Ascending aorta (tissue), 2 donors: ENCODE measurements at regions of chr5 and their contacts with region 1.

Region 1: GRCh38 chr5:69234457-69235268 is at the start of gene CDK7:
- DNase-seq: peak; percentile 75 to 97
- H3K4me3 ChIP-seq: peak within 1 kb of the TSS; percentile 85 to 87
- H3K27ac ChIP-seq: peak within 1 kb of the TSS; percentile 83 to 87
- H3K4me1 ChIP-seq: peaks cover 0 to 12% of the 10 kb centered on the region in 2 donors
- H3K27me3 ChIP-seq: no peaks in the 10 kb centered on the region
- CTCF ChIP-seq: no peak
- total RNA-seq, gene CDK7: 94.3 TPM

Region 2: GRCh38 chr5:68519143-68519542 is 715.5 kb before region 1 on chr5:
- intact Hi-C with region 1: no loop called
- DNase-seq: no peak
- H3K4me3 ChIP-seq: no peak overlapping the region
- H3K27ac ChIP-seq: no peak overlapping the region
- H3K4me1 ChIP-seq: no peaks in the 10 kb centered on the region
- H3K27me3 ChIP-seq: no peaks in the 10 kb centered on the region
- CTCF ChIP-seq: no peak

Region 3: DNA sequence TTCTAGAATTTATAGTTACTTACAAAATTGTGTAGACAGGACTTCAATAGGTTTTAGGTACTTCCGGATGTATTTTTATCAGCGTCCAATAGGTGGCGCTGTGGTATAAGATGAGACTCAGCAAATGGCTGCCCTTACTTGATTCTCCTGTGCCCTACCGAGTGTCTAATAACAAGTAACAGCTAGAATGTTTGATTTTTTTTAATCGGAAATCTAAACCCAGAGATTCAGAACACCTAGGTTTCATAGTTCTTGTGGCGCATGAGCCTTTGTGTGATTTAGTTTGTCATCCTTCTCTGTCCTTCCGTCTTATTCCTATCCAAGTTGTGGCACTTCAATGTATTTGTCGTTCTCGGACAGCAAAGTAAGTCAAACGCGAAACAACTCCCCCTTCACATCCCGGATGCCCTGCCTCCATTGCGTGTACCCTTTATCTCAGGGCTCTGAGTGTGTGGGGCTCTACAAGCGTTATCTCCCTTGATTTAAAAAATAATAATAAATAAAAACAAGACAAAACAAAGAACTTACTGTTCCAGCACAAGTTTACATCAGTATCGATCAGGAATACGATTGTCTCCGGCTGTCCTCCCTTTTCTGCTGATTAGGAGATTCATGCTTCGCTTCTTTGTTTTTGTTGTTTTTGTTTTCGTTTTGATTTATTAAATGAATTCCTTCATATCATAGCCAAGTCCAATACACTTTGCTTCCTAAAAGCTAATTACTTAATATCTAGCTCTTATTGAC is 191.6 kb before region 1 on chr5:
- intact Hi-C with region 1: loop called (anchors 5 kb)
- DNase-seq: peak; percentile 15 to 88
- H3K4me3 ChIP-seq: peak overlapping the region; percentile 57 to 62
- H3K27ac ChIP-seq: peak overlapping the region; percentile 54 to 60
- H3K4me1 ChIP-seq: no peaks in the 10 kb centered on the region
- H3K27me3 ChIP-seq: no peaks in the 10 kb centered on the region
- CTCF ChIP-seq: peak; percentile 61 to 84 (median 83)

Region 4: DNA sequence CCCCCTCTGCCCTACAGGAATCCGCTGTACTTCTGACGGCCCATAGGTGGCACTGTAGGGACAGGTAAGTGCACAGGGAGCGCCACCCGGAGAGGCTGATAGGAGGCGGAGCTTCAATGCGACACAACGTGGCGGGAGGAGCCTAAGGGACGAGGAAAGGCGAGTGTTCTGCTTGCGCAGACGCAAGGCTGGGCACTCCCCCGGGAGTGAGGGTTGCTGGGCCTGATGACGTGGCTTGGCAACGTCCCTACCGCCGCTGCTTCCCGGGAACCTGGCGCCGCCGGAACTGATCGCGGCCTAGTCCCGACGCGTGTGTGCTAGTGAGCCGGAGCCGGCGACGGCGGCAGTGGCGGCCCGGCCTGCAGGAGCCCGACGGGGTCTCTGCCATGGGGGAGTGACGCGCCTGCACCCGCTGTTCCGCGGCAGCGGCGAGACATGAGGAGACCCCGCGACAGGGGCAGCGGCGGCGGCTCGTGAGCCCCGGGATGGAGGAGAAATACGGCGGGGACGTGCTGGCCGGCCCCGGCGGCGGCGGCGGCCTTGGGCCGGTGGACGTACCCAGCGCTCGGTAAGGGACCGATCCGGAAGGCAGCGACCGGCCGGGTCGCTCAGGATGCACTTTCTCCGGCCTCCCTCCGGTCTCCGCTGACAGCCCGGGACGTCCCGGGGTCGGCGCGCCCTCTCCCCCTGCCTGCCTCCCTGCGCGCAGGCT is 140.7 kb before region 1 on chr5 and contains the start of gene SLC30A5:
- intact Hi-C with region 1: loop called (anchors 1 kb)
- DNase-seq: peak; percentile 99 to 100
- H3K4me3 ChIP-seq: peak within 1 kb of the TSS; percentile 86 to 93
- H3K27ac ChIP-seq: peak within 1 kb of the TSS; percentile 91 to 94
- H3K4me1 ChIP-seq: peaks cover 0 to 12% of the 10 kb centered on the region in 2 donors
- H3K27me3 ChIP-seq: no peaks in the 10 kb centered on the region
- CTCF ChIP-seq: peak; percentile 90 to 92 (median 90)
- total RNA-seq, gene SLC30A5: 20.6 TPM

Region 5: GRCh38 chr5:69166686-69167492 is 67.8 kb before region 1 on chr5 and contains the start of gene CCNB1:
- intact Hi-C with region 1: loop called (anchors 1 kb)
- DNase-seq: peak; percentile 90 to 98
- H3K4me3 ChIP-seq: peak within 1 kb of the TSS; percentile 58 to 77
- H3K27ac ChIP-seq: peak within 1 kb of the TSS in 1 of 2 donors; percentile 34
- H3K4me1 ChIP-seq: peaks cover 0 to 8% of the 10 kb centered on the region in 2 donors
- H3K27me3 ChIP-seq: no peaks in the 10 kb centered on the region
- CTCF ChIP-seq: no peak
- total RNA-seq, gene CCNB1: 16.0 TPM

Region 6: GRCh38 chr5:69189162-69190086 is 45.2 kb before region 1 on chr5 and contains the start of gene CENPH:
- intact Hi-C with region 1: loop called (anchors 1 kb)
- DNase-seq: peak; percentile 52 to 93
- H3K4me3 ChIP-seq: peak within 1 kb of the TSS; percentile 82 to 85
- H3K27ac ChIP-seq: peak within 1 kb of the TSS; percentile 75
- H3K4me1 ChIP-seq: peaks cover 0 to 4% of the 10 kb centered on the region in 2 donors
- H3K27me3 ChIP-seq: no peaks in the 10 kb centered on the region
- CTCF ChIP-seq: no peak
- total RNA-seq, gene CENPH: not detected

Region 7: GRCh38 chr5:69217548-69218526 is 16.8 kb before region 1 on chr5:
- intact Hi-C with region 1: loop called (anchors 1 kb)
- DNase-seq: peak; percentile 91 to 99
- H3K4me3 ChIP-seq: peak overlapping the region; percentile 84 to 86
- H3K27ac ChIP-seq: peak overlapping the region; percentile 88 to 91
- H3K4me1 ChIP-seq: peaks cover 0 to 6% of the 10 kb centered on the region in 2 donors
- H3K27me3 ChIP-seq: no peaks in the 10 kb centered on the region
- CTCF ChIP-seq: peak; percentile 23 to 26 (median 25)

Region 8: DNA sequence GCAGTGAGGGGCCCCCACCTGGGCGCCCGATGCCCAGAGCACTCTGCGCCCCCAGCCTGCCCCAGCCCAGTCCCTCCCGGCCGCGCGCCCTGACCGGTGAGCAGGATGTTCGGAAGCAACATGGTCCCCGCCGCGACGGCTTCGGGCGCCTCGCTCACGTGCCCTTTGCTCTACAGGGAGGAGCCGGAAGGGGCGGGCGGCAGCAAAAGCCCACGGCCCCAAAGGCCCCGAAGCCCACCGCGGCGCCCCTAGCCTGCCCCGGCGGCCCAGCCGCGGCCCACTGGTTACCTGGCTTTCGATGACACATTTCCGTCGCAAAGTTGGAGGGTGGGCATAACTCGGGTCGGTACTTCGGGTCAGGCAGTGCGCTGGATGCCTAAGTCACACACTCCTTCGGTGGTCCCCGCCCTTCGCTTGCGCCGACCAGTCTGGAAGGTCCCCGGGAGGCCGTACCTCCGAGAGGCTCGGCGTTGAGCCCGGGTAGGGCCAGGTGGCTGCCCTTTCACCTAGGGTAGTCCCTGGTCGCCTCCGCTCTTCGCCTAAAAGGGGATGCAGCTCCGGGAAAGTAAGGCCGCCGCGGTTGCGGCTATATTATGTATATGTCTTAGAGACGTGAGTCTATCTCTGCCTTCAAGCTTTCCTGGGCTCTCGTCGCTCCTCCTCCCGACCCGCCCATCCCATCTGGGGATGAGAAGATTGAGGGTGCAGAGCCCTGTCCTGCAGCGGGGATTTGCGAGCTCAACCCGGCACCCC is 134.9 kb after region 1 on chr5 and contains the starts of genes AK6, RAD17 and TAF9:
- intact Hi-C with region 1: loop called (anchors 1 kb)
- DNase-seq: peak; percentile 73 to 94
- H3K4me3 ChIP-seq: peak within 1 kb of the TSS; percentile 70 to 81
- H3K27ac ChIP-seq: peak within 1 kb of the TSS; percentile 90 to 94
- H3K4me1 ChIP-seq: peaks cover 7 to 18% of the 10 kb centered on the region in 2 donors
- H3K27me3 ChIP-seq: no peaks in the 10 kb centered on the region
- CTCF ChIP-seq: no peak
- total RNA-seq, gene AK6: 3.9 TPM
- total RNA-seq, gene RAD17: 24.4 TPM
- total RNA-seq, gene TAF9: 6.3 TPM

Region 9: DNA sequence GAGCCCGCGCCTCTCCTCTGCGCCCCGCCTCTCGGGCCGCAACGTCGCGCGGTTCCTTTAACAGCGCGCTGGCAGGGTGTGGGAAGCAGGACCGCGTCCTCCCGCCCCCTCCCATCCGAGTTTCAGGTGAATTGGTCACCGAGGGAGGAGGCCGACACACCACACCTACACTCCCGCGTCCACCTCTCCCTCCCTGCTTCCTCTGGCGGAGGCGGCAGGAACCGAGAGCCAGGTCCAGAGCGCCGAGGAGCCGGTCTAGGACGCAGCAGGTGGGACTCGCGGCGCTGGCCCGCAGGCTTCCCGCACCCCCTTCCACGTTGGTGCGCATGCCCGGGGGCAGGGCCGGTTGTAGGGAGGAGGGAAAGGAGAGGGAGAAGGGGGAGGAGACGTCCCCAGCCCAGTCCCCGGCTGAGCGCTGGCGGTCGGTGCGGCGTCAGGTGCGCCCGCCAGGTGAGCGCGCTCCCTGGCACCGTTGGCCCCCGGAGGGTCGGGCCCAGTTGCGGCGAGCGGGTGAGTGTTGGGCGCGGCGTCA is 257.8 kb after region 1 on chr5 and contains the start of gene OCLN:
- intact Hi-C with region 1: no loop called
- DNase-seq: peak in 1 of 2 donors; percentile 59
- H3K4me3 ChIP-seq: peak within 1 kb of the TSS; percentile 68 to 80
- H3K27ac ChIP-seq: no peak within 1 kb of the TSS
- H3K4me1 ChIP-seq: peaks cover 0 to 5% of the 10 kb centered on the region in 2 donors
- H3K27me3 ChIP-seq: no peaks in the 10 kb centered on the region
- CTCF ChIP-seq: no peak
- total RNA-seq, gene OCLN: 0.53 TPM